ENCODE measurements at regions of chr11 and their contacts with region 1.

Region 1: DNA sequence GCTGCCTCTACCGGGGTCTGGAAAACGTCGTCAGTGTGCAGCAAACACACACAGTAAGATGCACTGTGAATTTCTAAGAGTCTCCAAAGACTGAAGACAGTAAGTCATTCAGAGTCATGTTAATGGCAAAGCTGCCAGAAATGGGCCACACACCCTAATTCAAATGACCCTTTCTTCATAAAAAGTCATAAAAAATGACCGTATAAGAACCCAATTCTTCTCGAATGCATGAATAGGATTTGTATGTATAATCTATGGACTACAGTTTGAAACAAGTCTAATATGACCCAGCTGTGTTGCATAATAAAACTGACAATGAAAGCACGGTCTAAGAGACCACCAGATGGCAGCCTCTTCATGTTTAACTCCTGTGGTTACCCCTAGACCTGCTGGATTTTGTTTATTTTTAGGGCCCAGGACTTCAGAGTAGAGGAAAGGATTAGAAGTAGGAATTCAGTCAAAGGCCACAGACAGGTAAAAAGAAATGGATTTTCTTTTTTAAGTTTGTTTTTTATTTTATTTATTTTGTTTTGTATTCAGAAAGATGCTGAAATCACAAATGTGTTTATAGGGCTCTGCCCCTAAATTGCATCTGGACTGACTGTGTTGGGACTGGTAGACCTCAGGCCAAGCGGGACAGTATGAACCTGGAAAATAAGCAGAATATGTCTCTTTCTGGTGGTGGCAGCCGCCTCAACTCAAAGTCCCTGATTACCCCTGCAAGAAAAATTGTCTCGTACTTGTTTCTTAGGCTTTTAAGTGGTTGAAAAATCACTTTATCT is 32.1 kb upstream of the SLC5A12 start:
- DNase-seq: no peak

Region 2: GRCh38 chr11:26442131-26442530 is 311.8 kb before region 1 on chr11:
- intact Hi-C with region 1: no loop called
- DNase-seq: no peak

Region 3: DNA sequence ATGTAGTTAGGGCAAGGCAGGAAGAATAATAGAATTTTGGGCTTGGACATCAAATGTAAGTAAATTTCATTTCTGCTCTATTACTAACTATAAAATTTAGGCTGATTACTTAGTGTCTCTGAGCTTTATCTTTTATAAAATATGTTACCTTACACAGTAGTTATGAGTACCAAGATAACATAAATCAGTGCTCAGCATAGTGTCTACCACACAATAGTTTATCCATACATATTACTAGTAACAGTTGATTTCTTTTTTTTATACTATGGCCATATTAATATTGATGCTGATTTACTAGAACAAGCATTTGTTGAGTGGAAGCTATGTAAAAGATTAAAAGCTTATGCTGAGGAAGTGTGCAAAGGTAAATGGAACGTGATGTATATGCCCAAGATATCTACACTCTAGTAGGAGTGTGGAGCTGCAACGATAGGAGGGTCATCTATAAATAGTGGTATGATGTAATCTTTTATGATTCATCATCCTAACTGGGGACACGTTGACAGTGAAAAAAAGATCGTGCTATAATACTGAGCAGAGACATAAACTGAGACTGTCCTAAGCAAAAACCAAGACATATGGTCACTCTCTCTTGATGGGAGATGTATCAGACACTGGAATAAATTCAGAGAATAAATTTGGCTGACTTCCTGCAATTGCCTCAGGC is 23.4 kb before region 1 on chr11:
- intact Hi-C with region 1: no loop called
- DNase-seq: no peak

Region 4: DNA sequence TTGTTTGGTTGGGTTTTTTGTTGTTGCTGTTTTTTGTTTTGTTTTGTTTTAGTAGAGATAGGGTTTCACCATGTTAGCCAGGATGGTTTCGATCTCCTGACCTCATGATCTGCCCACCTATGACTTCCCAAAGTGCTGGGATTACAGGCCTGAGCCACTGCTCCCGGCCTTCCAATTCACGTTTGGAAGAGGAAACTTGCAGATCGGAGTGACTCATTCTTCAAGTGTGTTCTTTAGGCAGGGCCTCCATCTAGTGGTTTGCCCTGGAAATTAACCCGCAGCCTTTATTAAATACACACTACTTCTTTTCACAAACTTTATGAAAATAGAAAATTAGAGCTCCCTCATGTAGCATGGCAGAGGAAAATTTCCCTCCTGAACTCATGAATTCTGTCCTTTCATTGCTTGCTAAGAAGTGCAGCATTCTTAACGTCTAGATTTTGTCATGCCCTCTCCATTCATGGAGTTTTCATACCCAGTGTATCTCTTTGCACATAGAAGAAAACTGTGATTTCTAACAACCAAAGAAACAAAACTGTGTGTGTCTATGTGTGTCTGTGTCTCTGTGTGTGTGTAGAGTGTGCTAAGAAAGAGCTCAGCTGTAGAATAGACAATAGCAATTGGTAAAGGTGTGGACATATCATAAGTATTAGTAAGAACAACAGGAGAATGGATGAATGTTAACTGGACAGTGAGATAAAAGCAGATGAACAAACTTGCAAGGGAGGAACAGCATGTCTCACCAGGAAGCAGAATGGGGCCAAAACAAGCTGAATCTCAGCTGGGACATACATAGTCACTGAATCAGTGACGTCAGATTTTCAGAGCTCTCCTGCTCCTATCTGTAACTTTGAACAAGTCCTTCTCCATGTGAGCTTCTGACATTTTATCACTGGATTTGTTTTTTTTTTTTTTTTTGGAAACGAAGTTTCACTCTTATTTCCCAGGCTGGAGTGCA is 405.1 kb after region 1 on chr11:
- intact Hi-C with region 1: loop called in 1 of 2 experiments (anchors 5 kb)
- DNase-seq: no peak

Region 5: GRCh38 chr11:27485930-27486773 is 732.2 kb after region 1 on chr11:
- intact Hi-C with region 1: loop called in 1 of 2 experiments (anchors 10 kb)
- DNase-seq: no peak

Measured in posterior vena cava (tissue), 2 donors.